GM10248 (cell line): ENCODE measurements at regions of chr3 and their contacts with region 1.

Region 1: DNA sequence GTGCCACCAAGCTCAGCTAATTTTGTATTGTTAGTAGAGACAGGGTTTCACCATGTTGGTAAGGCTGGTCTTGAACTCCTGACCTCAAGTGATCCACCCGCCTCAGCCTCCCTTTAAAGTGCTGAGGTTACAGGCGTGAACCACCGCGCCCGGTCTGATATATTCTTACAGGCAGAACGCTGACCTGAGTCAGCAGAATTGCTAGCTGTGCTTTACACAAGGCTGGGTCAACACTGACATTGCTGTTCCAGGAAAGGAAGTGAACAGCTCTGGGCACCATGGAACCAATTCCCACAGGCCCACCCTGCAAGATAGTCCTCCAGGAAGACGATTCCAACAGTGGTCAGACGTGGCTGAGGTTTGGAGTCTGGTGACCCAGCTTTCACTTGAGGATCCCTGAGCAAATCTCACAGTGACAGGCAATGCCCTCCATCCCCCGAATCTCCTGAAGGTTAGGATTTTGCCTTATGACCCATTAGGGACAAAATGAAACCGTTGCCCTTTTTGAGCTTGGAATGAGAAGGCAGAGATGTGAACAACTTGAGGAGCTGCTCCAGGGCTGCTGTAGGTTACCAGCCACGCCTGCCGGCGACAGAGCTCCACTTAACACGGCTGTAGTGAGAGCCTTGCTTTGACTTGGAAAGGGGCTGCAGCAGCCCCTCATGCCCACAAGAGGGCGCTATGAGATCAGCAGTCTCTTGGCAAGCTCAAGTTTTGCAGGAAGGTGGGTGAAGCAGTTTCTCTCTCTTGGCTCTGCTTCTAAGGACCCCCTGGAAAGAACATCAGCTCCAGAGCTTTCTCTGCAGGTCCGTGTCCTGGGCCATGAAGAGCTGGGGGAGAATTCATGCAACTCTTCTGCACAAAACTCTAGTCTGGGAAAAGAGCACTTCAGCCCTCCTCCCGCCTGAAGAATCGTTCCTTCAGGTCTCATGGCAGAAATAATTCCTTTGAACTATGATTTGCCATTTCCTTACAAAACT is 74.1 kb downstream of the SENP2 start:
- DNase-seq: peak; percentile 82
- CTCF ChIP-seq: peak; percentile 98

Region 2: DNA sequence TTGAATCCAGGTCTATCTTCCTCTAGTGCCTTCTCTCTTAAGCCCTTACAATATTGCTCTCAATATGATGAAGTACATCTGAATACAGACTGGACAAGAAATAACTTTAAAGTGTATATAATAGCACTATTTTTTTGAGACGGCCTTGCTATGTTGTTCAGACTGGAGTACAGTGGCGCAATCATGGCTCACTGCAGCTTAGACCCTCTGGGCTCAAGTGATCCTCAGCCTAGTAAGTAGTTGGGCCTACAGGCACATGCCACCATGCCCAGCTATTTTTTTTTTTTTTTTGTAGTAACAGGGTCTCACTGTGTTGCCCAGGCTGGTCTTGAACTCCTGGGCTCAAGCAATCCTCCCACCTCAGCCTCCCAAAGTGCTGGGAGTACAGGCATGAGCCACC is 243.7 kb before region 1 on chr3:
- CTCF ChIA-PET with region 1: no interaction called
- POLR2A ChIA-PET with region 1: no interaction called
- DNase-seq: no peak
- CTCF ChIP-seq: no peak

Region 3: GRCh38 chr3:185585859-185586685 is 74.2 kb before region 1 on chr3 and contains the start of gene SENP2:
- CTCF ChIA-PET with region 1: interaction called, 12 read pairs
- POLR2A ChIA-PET with region 1: no interaction called
- DNase-seq: peak; percentile 97
- CTCF ChIP-seq: no peak

Region 4: DNA sequence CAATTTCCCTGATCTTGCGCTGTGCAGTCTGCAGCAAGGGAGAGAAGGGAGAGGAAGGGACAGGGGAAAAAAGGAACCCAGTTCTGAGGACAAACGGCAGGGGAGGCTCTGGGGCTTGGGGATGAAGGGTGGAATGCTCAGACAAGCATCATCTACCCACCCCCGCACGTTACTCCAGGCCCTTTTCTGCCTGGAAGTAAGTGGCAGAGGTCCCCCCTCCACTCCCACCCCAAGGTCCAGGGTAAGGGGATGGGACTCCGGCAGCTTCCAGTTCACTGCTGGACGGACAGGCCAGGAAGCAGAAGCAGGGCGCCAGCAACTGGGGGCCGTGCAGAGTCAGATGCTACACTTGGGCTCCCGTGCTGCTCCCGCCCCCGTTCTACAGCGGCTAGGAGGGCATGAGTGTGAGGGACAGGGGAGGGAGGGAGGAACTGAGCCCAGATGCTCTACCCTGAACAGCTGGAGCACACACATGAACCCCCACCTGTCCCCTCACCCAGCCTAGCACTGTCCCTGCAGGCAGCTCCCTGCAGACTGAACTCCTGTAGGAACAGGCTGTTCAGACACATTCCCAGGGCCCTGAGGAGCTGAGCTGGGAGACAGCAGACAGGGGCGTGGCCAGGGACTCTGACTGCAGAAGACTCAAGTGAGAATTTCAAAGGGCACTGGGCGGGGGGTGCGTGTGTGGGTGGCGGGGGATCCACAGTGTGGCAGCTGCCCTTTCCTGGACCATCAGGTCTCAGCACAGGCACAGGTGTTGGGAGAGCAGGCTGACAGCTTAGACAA is 14.4 kb before region 1 on chr3:
- CTCF ChIA-PET with region 1: interaction called, 108 read pairs
- POLR2A ChIA-PET with region 1: no interaction called
- DNase-seq: no peak
- CTCF ChIP-seq: no peak

Region 5: GRCh38 chr3:185717121-185717520 is 56.9 kb after region 1 on chr3:
- CTCF ChIA-PET with region 1: interaction called, 13 read pairs
- POLR2A ChIA-PET with region 1: no interaction called
- DNase-seq: no peak
- CTCF ChIP-seq: no peak

Region 6: GRCh38 chr3:185764163-185764979 is 104.1 kb after region 1 on chr3:
- CTCF ChIA-PET with region 1: interaction called, 189 read pairs
- POLR2A ChIA-PET with region 1: no interaction called
- DNase-seq: no peak
- CTCF ChIP-seq: no peak

Region 7: GRCh38 chr3:185942907-185943759 is 282.9 kb after region 1 on chr3:
- CTCF ChIA-PET with region 1: interaction called, 11 read pairs
- POLR2A ChIA-PET with region 1: no interaction called
- DNase-seq: peak; percentile 84
- CTCF ChIP-seq: peak; percentile 99